Transverse colon (tissue), 4 donors: ENCODE measurements at regions of chr10 and their contacts with region 1.

Region 1: GRCh38 chr10:63629363-63630084 is 108.3 kb downstream of the REEP3 start:
- DNase-seq: peak; percentile 96
- H3K4me3 ChIP-seq: peak overlapping the region; percentile 36 to 71 (median 61)
- H3K27ac ChIP-seq: peak overlapping the region; percentile 97 to 100 (median 98)
- H3K4me1 ChIP-seq: peaks cover 7 to 29% (median 23%) of the 10 kb centered on the region in 4 donors
- H3K27me3 ChIP-seq: no peaks in the 10 kb centered on the region
- CTCF ChIP-seq: peak; percentile 66 to 85 (median 72)
- EP300 ChIP-seq: peak; percentile 77
- POLR2A ChIP-seq: no peak

Region 2: GRCh38 chr10:63217120-63217605 is 412.4 kb before region 1 on chr10:
- in situ Hi-C with region 1: loop called (anchors 10 to 25 kb)
- intact Hi-C with region 1: no loop called
- DNase-seq: no peak
- H3K4me3 ChIP-seq: no peak overlapping the region
- H3K27ac ChIP-seq: peak overlapping the region; percentile 18 to 55 (median 28)
- H3K4me1 ChIP-seq: peaks cover 5 to 23% (median 13%) of the 10 kb centered on the region in 4 donors
- H3K27me3 ChIP-seq: no peaks in the 10 kb centered on the region
- CTCF ChIP-seq: peak; percentile 66 to 91 (median 77)
- EP300 ChIP-seq: no peak
- POLR2A ChIP-seq: no peak

Region 3: GRCh38 chr10:63365976-63366765 is 263.4 kb before region 1 on chr10:
- in situ Hi-C with region 1: no loop called
- intact Hi-C with region 1: no loop called
- DNase-seq: no peak
- H3K4me3 ChIP-seq: no peak overlapping the region
- H3K27ac ChIP-seq: no peak overlapping the region
- H3K4me1 ChIP-seq: no peaks in the 10 kb centered on the region
- H3K27me3 ChIP-seq: no peaks in the 10 kb centered on the region
- CTCF ChIP-seq: no peak
- EP300 ChIP-seq: no peak
- POLR2A ChIP-seq: no peak

Region 4: GRCh38 chr10:63521416-63522276 is 107.9 kb before region 1 on chr10:
- in situ Hi-C with region 1: no loop called
- intact Hi-C with region 1: loop called (anchors 2 kb)
- DNase-seq: peak; percentile 66
- H3K4me3 ChIP-seq: peak overlapping the region; percentile 78 to 93 (median 89)
- H3K27ac ChIP-seq: peak overlapping the region; percentile 99 to 100 (median 100)
- H3K4me1 ChIP-seq: peaks cover 22 to 50% (median 38%) of the 10 kb centered on the region in 4 donors
- H3K27me3 ChIP-seq: no peaks in the 10 kb centered on the region
- CTCF ChIP-seq: no peak
- EP300 ChIP-seq: no peak
- POLR2A ChIP-seq: peak; percentile 64

Region 5: DNA sequence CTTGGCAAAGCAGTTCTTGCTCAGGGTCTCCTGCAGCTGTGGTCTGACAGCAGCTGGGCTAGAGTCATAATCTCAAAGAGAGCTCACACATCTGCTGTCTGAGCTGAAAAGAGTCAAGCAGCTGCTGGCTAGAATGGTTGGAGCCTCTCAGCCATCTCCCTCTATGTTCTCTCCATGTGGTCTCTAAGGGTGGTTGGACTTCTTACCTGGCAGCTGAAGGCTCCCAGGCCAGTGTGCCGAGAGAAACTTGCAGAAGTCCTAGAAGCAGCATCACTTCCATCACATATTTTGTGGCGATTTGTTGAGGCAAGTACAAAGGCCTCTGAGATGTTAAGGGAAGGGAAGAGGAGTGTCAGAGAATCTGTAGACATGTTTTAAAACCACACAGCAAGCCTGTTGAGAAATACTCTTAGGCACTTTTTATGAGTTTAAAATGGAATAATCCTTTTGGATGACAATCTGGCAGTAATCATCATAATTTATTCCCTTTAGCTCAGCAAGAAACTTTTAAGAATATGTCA is 15.1 kb before region 1 on chr10:
- in situ Hi-C with region 1: no loop called
- intact Hi-C with region 1: no loop called
- DNase-seq: no peak
- H3K4me3 ChIP-seq: no peak overlapping the region
- H3K27ac ChIP-seq: peak overlapping the region in 1 of 4 donors; percentile 9
- H3K4me1 ChIP-seq: no peaks in the 10 kb centered on the region
- H3K27me3 ChIP-seq: no peaks in the 10 kb centered on the region
- CTCF ChIP-seq: no peak
- EP300 ChIP-seq: no peak
- POLR2A ChIP-seq: no peak

Region 6: DNA sequence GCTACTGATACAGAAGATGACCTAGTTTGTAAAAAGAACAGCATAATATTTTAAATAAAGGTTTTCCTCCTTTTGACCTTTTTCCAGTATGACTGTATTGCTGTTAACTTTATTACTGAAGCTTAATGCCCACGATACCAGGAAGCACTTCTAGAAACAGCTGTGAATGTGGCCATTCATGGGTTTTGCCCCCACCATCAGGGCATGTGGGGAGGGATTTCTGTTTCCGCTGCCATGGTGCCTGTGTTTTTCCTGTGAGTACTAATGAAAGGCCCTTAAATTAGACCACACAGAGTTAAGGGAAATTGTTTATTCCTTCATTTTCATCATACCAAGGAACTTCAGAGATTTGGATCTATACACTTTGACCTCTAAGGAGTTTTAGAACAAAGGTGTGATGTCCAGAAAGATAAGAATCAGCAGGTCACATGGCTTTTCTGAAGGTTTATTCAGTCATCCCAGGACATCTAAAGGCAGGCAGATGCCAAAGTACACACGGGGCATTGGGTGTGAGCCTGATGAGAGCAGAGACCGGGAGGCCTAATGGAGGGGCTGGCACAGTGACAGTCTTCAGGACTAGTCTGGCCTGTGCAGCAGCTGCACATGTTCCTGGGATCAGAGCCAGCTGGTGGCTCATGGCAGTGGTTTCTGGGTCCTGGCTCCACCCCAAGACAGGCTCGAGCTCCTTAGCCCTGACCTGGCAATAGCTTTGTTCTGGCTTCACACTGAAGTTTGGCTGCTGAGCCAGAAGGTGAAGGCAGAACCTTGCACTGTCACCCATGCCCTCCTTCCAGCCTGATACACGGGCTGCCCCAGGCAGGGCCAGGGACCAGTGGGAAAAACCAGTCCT is 82.6 kb after region 1 on chr10:
- in situ Hi-C with region 1: loop called in 3 of 4 experiments (anchors 5 to 10 kb)
- intact Hi-C with region 1: loop called (anchors 5 kb)
- DNase-seq: peak; percentile 95
- H3K4me3 ChIP-seq: no peak overlapping the region
- H3K27ac ChIP-seq: peak overlapping the region; percentile 82 to 89 (median 86)
- H3K4me1 ChIP-seq: peaks cover 27 to 50% (median 37%) of the 10 kb centered on the region in 4 donors
- H3K27me3 ChIP-seq: no peaks in the 10 kb centered on the region
- CTCF ChIP-seq: no peak
- EP300 ChIP-seq: no peak
- POLR2A ChIP-seq: no peak